HCT116 (cell line): ENCODE measurements at regions of chr1 and their contacts with region 1.

Region 1: GRCh38 chr1:201877877-201878401 is 10.8 kb upstream of the SHISA4 start:
- DNase-seq: peak; percentile 46
- ATAC-seq: peak; percentile 42
- H3K4me3 ChIP-seq: no peak overlapping the region
- H3K27ac ChIP-seq: peak overlapping the region; percentile 15; the same call in 1 of the 2 replicates
- H3K4me1 ChIP-seq: peaks cover 7 to 25% of the 10 kb centered on the region in 2 experiments
- H3K27me3 ChIP-seq: no peaks in the 10 kb centered on the region
- CTCF ChIP-seq: peak; percentile 65 to 70 (median 69)
- POLR2A ChIP-seq: no peak
- RAD21 ChIP-seq: peak; percentile 80

Region 2: GRCh38 chr1:201958348-201958747 is 80.4 kb after region 1 on chr1:
- CTCF ChIA-PET with region 1: no interaction called
- POLR2A ChIA-PET with region 1: no interaction called
- RAD21 ChIA-PET with region 1: no interaction called
- intact Hi-C with region 1: no loop called
- DNase-seq: no peak
- ATAC-seq: no peak
- H3K4me3 ChIP-seq: no peak overlapping the region
- H3K27ac ChIP-seq: no peak overlapping the region
- H3K4me1 ChIP-seq: peaks cover 4 to 10% of the 10 kb centered on the region in 2 experiments; a peak in 1 of 4 replicates
- H3K27me3 ChIP-seq: no peaks in the 10 kb centered on the region
- CTCF ChIP-seq: no peak
- POLR2A ChIP-seq: no peak
- RAD21 ChIP-seq: no peak

Region 3: GRCh38 chr1:201970334-201971159 is 92.6 kb after region 1 on chr1:
- CTCF ChIA-PET with region 1: interaction called, 27 read pairs
- POLR2A ChIA-PET with region 1: interaction called, 4 read pairs
- RAD21 ChIA-PET with region 1: interaction called, 3 to 5 read pairs
- intact Hi-C with region 1: loop called (anchors 1 kb)
- DNase-seq: no peak
- ATAC-seq: peak; percentile 44
- H3K4me3 ChIP-seq: no peak overlapping the region
- H3K27ac ChIP-seq: no peak overlapping the region
- H3K4me1 ChIP-seq: no peaks in the 10 kb centered on the region
- H3K27me3 ChIP-seq: no peaks in the 10 kb centered on the region
- CTCF ChIP-seq: no peak
- POLR2A ChIP-seq: no peak
- RAD21 ChIP-seq: no peak

Region 4: GRCh38 chr1:202034683-202035462 is 156.9 kb after region 1 on chr1:
- CTCF ChIA-PET with region 1: no interaction called
- POLR2A ChIA-PET with region 1: no interaction called
- RAD21 ChIA-PET with region 1: no interaction called
- intact Hi-C with region 1: no loop called
- DNase-seq: peak; percentile 91
- ATAC-seq: peak; percentile 93
- H3K4me3 ChIP-seq: peak overlapping the region; percentile 20 to 44; a peak in 3 of 4 replicates
- H3K27ac ChIP-seq: peak overlapping the region; percentile 93
- H3K4me1 ChIP-seq: peaks cover 44 to 63% of the 10 kb centered on the region in 2 experiments
- H3K27me3 ChIP-seq: no peaks in the 10 kb centered on the region
- CTCF ChIP-seq: no peak
- POLR2A ChIP-seq: no peak
- RAD21 ChIP-seq: peak; percentile 24; the same call in 1 of the 2 replicates